Activated T-helper 1 cell treated with anti-CD3 and anti-CD28 coated beads, Interleukin-12 subunit alpha, Interleukin-12 subunit beta, Interleukin-2, Interleukin-4 antibody, amounts not matched to agents 30 ng/mL and 10 ng/mL and 1 ng/mL, durations not matched to agents 14 hours and 24 hours and 36 hours (primary cell): ENCODE measurements at regions of chr15 and their contacts with region 1.

Region 1: DNA sequence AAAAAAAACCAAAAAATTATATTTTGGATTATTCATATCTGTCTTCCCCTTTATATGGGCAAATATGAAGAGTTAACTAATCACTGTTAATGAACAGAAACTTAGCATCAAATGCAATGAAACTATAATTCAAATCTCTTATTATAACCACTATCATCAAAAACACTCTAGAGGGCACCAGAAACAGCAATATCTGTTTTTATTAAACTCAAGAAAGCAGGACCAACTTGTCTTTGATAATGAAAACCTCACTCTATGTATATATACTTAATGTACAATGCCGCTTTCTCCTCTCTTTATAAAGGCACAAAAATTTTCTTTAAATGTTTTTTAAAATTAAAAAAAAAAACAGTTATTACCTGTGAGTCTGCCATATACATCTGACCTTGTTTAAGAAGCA is 92.7 kb downstream of the UACA start:
- DNase-seq: no peak
- H3K4me3 Mint-ChIP-seq: no peak overlapping the region
- H3K27ac Mint-ChIP-seq: no peak overlapping the region
- H3K4me1 Mint-ChIP-seq: peaks cover 11% of the 10 kb centered on the region
- H3K27me3 Mint-ChIP-seq: peaks cover 26% of the 10 kb centered on the region

Region 2: GRCh38 chr15:70559265-70560239 is 111.1 kb before region 1 on chr15:
- intact Hi-C with region 1: loop called (anchors 10 kb)
- DNase-seq: peak; percentile 54
- H3K4me3 Mint-ChIP-seq: no peak overlapping the region
- H3K27ac Mint-ChIP-seq: no peak overlapping the region
- H3K4me1 Mint-ChIP-seq: no peaks in the 10 kb centered on the region
- H3K27me3 Mint-ChIP-seq: peaks cover 25% of the 10 kb centered on the region

Region 3: GRCh38 chr15:70690491-70691257 is 20.0 kb after region 1 on chr15:
- intact Hi-C with region 1: no loop called
- DNase-seq: no peak
- H3K4me3 Mint-ChIP-seq: no peak overlapping the region
- H3K27ac Mint-ChIP-seq: no peak overlapping the region
- H3K4me1 Mint-ChIP-seq: no peaks in the 10 kb centered on the region
- H3K27me3 Mint-ChIP-seq: peaks cover 6% of the 10 kb centered on the region

Region 4: DNA sequence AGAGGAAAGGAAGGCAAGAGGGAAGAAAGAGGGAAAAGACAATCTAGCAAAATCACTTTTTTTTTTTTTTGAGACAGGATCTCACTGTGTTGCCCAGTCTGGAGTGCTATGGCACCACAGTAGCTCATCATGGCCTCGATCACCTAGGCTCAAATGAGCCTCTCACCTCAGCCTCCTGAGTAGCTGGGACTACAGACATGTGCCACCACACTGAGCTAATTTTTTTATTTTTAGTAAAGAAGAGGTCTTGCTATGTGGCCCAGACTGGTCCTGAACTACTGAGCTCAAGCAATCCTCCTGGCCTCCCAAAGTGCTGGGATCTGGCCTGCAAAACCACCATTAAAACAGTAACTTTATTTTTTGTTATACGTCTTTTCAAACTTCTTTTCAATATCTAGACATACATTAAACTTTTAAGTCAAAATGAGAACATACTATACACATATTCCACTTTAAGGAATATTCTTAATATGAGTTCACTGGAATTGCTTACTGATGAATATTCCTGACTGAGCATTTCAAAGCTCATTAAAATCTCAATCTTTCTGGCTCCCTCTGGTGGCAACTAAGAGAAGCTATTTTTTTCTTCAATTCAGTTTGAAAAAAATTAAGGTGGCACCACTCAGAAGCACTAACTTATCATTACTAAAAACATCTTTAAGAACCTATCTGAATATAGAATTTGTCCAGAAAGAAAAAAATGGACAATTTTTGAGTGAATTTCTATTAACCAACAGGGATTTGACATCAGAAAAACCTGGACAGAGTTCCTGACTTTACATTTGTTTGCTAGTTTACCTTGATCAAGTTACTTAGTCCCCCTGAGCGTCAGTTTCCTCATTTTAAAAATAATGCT is 51.8 kb after region 1 on chr15:
- intact Hi-C with region 1: loop called (anchors 10 kb)
- DNase-seq: no peak
- H3K4me3 Mint-ChIP-seq: no peak overlapping the region
- H3K27ac Mint-ChIP-seq: no peak overlapping the region
- H3K4me1 Mint-ChIP-seq: no peaks in the 10 kb centered on the region
- H3K27me3 Mint-ChIP-seq: peaks cover 21% of the 10 kb centered on the region